ENCODE measurements at regions of chr6 and their contacts with region 1.

Region 1: DNA sequence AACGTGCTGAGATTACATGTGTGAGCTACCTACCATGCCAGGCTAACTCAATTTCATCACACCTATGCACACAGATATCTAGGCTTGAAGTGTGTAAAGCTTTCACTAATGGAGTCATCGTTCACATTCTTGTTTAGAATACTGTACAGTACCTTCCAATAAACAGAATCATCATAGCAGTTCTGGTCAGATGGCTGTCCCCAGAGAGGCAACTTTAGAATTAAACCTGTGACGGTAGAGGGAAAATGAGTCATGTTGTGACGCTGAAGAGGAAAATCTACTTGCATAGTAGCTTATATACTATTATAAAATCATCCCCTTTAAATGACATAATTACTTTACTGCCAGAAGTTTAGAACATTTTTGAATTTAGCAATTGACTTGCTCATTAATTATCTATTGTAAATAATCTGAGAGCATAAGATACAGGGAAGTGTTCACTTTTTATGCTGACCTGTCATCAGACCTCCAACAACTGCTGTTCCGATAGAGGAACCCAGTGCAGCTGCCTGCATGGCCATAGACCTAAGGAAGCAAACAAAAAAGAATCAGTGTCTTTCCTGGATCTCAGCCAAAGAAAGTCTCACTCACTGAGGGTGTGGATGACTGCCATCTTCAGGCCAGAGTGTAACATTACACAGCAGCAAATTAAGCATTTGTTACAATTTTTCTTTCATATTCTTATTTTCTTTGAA is 29.8 kb downstream of the RHAG start:
- DNase-seq: peak in 2 of 3 donors; percentile 13 to 42
- ATAC-seq: peak in 1 of 2 donors; percentile 69
- H3K4me3 ChIP-seq: no peak overlapping the region
- H3K27ac ChIP-seq: no peak overlapping the region
- H3K4me1 ChIP-seq: no peaks in the 10 kb centered on the region
- H3K27me3 ChIP-seq: no peaks in the 10 kb centered on the region

Region 2: DNA sequence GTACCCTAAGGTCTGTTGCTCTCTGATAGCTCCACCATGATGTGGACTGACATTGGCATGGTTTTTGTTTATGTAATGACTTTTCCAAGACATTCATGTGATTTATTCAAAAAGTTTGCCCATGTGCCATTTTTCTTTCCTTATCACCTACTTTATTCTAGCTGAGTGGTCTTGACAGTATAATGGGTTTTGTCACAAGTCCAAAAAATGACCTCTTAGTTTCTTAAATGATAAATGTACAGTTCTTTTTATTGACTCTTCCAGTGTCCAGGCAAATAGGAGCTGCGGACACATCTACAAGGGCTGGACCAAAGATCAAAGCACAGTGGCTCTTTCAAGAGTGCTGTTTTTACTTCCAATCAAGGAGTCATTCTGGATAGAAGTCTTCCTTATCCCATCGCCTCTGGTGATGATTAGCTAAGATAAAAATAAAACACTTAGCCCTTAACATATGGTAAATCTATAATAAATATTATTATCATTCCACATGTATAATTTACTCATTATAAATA is 285.2 kb before region 1 on chr6:
- intact Hi-C with region 1: no loop called
- DNase-seq: no peak
- ATAC-seq: no peak
- H3K4me3 ChIP-seq: no peak overlapping the region
- H3K27ac ChIP-seq: no peak overlapping the region
- H3K4me1 ChIP-seq: no peaks in the 10 kb centered on the region
- H3K27me3 ChIP-seq: no peaks in the 10 kb centered on the region

Region 3: GRCh38 chr6:49531774-49532569 is 74.9 kb before region 1 on chr6:
- intact Hi-C with region 1: loop called in 3 of 4 experiments (anchors 5 kb)
- DNase-seq: no peak
- ATAC-seq: peak; percentile 62 to 69
- H3K4me3 ChIP-seq: no peak overlapping the region
- H3K27ac ChIP-seq: no peak overlapping the region
- H3K4me1 ChIP-seq: no peaks in the 10 kb centered on the region
- H3K27me3 ChIP-seq: no peaks in the 10 kb centered on the region